BJ (cell line): ENCODE measurements at regions of chr19 and their contacts with region 1.

Region 1: GRCh38 chr19:19138169-19138981 is at the start of gene TMEM161A:
- DNase-seq: peak; percentile 92
- H3K4me3 ChIP-seq: peak within 1 kb of the TSS; percentile 61
- H3K27me3 ChIP-seq: no peaks in the 10 kb centered on the region
- CTCF ChIP-seq: no peak
- polyA plus RNA-seq, gene TMEM161A: 23.6 and 40.1 TPM in 2 replicates

Region 2: GRCh38 chr19:19053508-19054314 is 84.7 kb before region 1 on chr19:
- CTCF ChIA-PET with region 1: interaction called, 19 read pairs
- POLR2A ChIA-PET with region 1: no interaction called
- DNase-seq: no peak
- H3K4me3 ChIP-seq: no peak overlapping the region
- H3K27me3 ChIP-seq: no peaks in the 10 kb centered on the region
- CTCF ChIP-seq: peak; percentile 75

Region 3: GRCh38 chr19:19176950-19177349 is 38.6 kb after region 1 on chr19:
- CTCF ChIA-PET with region 1: interaction called, 50 read pairs
- POLR2A ChIA-PET with region 1: no interaction called
- DNase-seq: no peak
- H3K4me3 ChIP-seq: no peak overlapping the region
- H3K27me3 ChIP-seq: no peaks in the 10 kb centered on the region
- CTCF ChIP-seq: no peak

Region 4: GRCh38 chr19:19342756-19343322 is 204.5 kb after region 1 on chr19:
- CTCF ChIA-PET with region 1: interaction called, 11 read pairs
- POLR2A ChIA-PET with region 1: no interaction called
- DNase-seq: no peak
- H3K4me3 ChIP-seq: no peak overlapping the region
- H3K27me3 ChIP-seq: no peaks in the 10 kb centered on the region
- CTCF ChIP-seq: peak; percentile 94